HepG2 (cell line): ENCODE measurements at regions of chr3 and their contacts with region 1.

Region 1: GRCh38 chr3:80688814-80689213 is 921.0 kb upstream of the ROBO1 start:
- DNase-seq: peak; percentile 19
- ATAC-seq: no peak
- H3K4me3 ChIP-seq: no peak overlapping the region
- H3K27ac ChIP-seq: no peak overlapping the region
- H3K4me1 ChIP-seq: no peaks in the 10 kb centered on the region
- H3K27me3 ChIP-seq: no peaks in the 10 kb centered on the region; a peak in 1 of 5 replicates
- CTCF ChIP-seq: peak; percentile 46
- EP300 ChIP-seq: no peak
- POLR2A ChIP-seq: no peak
- RAD21 ChIP-seq: no peak

Region 2: GRCh38 chr3:79175870-79176269 is 1512.9 kb before region 1 on chr3:
- CTCF ChIA-PET with region 1: no interaction called
- POLR2A ChIA-PET with region 1: no interaction called
- in situ Hi-C with region 1: no loop called
- intact Hi-C with region 1: no loop called
- DNase-seq: no peak
- ATAC-seq: no peak
- H3K4me3 ChIP-seq: no peak overlapping the region
- H3K27ac ChIP-seq: no peak overlapping the region
- H3K4me1 ChIP-seq: no peaks in the 10 kb centered on the region
- H3K27me3 ChIP-seq: no peaks in the 10 kb centered on the region
- CTCF ChIP-seq: no peak
- EP300 ChIP-seq: no peak
- POLR2A ChIP-seq: no peak
- RAD21 ChIP-seq: no peak

Region 3: GRCh38 chr3:80526153-80526552 is 162.7 kb before region 1 on chr3:
- CTCF ChIA-PET with region 1: interaction called, 4 read pairs
- POLR2A ChIA-PET with region 1: no interaction called
- in situ Hi-C with region 1: loop called (anchors 10 kb)
- intact Hi-C with region 1: loop called (anchors 2 kb)
- DNase-seq: no peak
- ATAC-seq: no peak
- H3K4me3 ChIP-seq: no peak overlapping the region
- H3K27ac ChIP-seq: no peak overlapping the region
- H3K4me1 ChIP-seq: no peaks in the 10 kb centered on the region
- H3K27me3 ChIP-seq: no peaks in the 10 kb centered on the region
- CTCF ChIP-seq: peak; percentile 45
- EP300 ChIP-seq: no peak
- POLR2A ChIP-seq: no peak
- RAD21 ChIP-seq: no peak

Region 4: DNA sequence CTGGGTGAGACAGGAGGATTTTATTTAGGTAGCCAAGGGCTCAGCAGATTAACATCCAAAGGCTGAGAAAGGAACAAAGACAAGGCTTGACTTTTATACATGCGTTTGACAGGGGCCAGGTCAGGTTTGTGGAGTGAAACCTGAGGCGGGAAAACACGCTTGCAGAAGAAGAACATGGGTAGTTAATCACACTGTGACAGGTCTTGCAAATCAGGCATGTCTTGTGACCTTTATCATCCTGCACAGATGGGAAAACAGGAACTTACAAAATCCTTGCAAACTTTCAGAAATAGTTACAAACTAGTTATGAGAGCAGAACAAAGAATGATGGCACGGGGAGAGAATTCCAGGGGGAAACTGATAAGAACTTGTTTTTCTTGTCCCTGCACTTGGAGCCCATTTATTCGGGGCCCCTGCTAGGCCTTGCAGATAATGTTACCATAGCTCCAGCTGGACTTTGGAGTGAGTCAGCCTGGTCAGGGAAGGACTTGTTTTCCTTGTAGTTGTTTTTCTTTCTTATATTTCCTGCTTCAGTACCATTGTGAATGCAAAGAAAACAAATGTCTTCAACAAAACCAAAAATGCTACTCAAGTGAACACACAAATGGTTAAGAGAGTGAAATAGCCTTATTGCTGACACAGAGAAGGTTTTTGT is 44.8 kb after region 1 on chr3:
- CTCF ChIA-PET with region 1: no interaction called
- POLR2A ChIA-PET with region 1: no interaction called
- in situ Hi-C with region 1: no loop called
- intact Hi-C with region 1: no loop called
- DNase-seq: peak; percentile 95
- ATAC-seq: peak; percentile 96
- H3K4me3 ChIP-seq: no peak overlapping the region; a peak in 1 of 6 replicates
- H3K27ac ChIP-seq: peak overlapping the region; percentile 79
- H3K4me1 ChIP-seq: peaks cover 30% of the 10 kb centered on the region
- H3K27me3 ChIP-seq: no peaks in the 10 kb centered on the region; a peak in 1 of 5 replicates
- CTCF ChIP-seq: no peak
- EP300 ChIP-seq: peak; percentile 51 to 94; a peak in 2 of 4 replicates
- POLR2A ChIP-seq: no peak
- RAD21 ChIP-seq: no peak